Heart left ventricle (tissue), 16 donors: ENCODE measurements at regions of chr9 and their contacts with region 1.

Region 1: DNA sequence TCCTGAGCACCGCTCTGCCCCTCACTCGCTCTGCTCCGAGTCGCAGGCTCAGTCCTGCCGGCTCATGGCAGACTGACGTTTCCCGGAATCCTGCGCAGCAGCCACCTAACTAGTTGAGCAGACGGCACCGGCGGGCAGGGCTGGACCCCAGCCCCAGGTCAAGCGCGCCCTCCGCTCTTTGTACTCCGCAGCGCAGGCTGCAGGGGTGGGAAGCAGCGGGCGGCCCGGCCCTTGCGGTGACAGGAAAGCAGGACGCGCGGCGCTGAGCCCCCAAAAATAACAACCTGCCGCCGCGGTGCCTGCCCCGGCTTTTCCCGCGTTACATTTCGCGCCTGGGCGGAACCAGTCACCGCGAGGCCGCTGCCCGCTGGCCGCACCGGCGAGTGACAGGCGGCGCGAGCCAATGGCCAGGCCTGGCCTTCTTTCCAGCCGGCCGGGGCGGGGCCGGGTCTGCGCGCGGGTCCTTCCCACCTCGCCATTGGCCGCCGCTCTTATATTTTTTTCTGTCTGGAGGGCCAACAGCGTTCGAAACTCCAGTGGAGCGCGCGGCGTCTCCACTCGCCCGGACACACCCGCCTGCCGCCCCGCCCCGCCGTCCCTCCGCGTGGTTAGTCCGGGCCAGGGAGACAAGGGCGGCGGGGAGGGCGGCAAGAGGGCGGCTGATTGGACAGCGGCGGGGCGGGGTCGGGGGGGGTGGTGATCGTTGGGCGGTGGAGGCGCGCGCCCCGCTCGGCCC is at the start of gene ZNF367:
- DNase-seq: peak; percentile 98 to 99 (median 99)
- ATAC-seq: peak; percentile 91 to 93 (median 93)
- H3K4me3 ChIP-seq: peak within 1 kb of the TSS; percentile 54 to 97 (median 83)
- H3K27ac ChIP-seq: peak within 1 kb of the TSS; percentile 99 to 100 (median 100)
- H3K4me1 ChIP-seq: peaks cover 6 to 51% (median 29%) of the 10 kb centered on the region in 12 donors
- H3K27me3 ChIP-seq: no peaks in the 10 kb centered on the region
- CTCF ChIP-seq: no peak
- POLR2A ChIP-seq: no peak
- total RNA-seq, gene ZNF367: 2.4 to 5.9 (median 3.2) TPM

Region 2: DNA sequence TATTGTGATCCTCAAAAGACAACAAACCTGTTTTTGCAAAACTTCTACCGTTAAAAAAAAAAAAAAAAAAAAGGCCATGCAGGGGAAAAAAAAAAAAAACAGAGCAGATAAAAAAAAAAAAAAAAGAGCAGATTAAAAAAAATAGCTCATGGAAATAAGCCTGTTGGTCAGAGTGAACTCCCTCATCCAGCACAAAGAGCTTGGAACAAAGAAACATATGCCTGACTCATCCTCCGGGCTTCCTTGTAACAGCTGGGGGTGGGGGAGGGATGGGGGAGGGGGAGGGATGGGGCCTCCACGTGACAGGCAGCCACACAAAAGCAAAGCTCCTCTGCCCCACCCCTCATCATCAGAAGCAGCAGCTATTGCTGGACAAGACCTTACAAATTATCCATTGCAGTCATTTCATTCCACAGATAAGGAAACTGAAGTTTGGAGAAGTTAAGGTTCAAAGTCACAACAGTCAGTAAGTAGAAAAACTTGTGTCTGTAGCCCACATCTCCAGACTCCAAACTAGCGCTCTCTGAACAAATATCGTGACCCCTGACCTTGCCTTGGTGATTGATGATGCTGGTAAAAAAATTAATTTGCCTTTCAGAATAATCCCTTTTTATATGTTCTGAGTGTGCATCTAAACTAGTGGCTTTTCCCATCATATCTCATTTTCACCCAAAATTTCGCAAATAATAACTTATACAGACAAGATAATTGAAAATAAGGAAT is 73.6 kb before region 1 on chr9:
- intact Hi-C with region 1: loop called in 2 of 10 experiments (anchors 5 to 10 kb)
- DNase-seq: peak; percentile 57 to 66 (median 63)
- ATAC-seq: peak; percentile 70 to 94 (median 91)
- H3K4me3 ChIP-seq: no peak overlapping the region
- H3K27ac ChIP-seq: peak overlapping the region in 11 of 12 donors; percentile 4 to 73 (median 46)
- H3K4me1 ChIP-seq: peaks cover 4 to 29% (median 10%) of the 10 kb centered on the region in 12 donors
- H3K27me3 ChIP-seq: no peaks in the 10 kb centered on the region
- CTCF ChIP-seq: no peak
- POLR2A ChIP-seq: no peak